CD14-positive monocyte (primary cell): ENCODE measurements at regions of chr10 and their contacts with region 1.

Region 1: GRCh38 chr10:79068562-79069324 is at the start of gene ZMIZ1:
- DNase-seq: peak; percentile 85 to 91 (median 88)
- H3K4me3 ChIP-seq: peak within 1 kb of the TSS; percentile 87 to 99 (median 99)
- H3K4me3 Mint-ChIP-seq: peak within 1 kb of the TSS; percentile 98
- H3K27ac ChIP-seq: peak within 1 kb of the TSS; percentile 94 to 96
- H3K27ac Mint-ChIP-seq: peak within 1 kb of the TSS; percentile 94 to 99 (median 97)
- H3K4me1 ChIP-seq: peaks cover 44 to 60% of the 10 kb centered on the region in 2 donors
- H3K4me1 Mint-ChIP-seq: peaks cover 54% of the 10 kb centered on the region
- H3K27me3 ChIP-seq: no peaks in the 10 kb centered on the region
- H3K27me3 Mint-ChIP-seq: peaks cover 1 to 7% (median 1%) of the 10 kb centered on the region in 3 donors
- CTCF ChIP-seq: peak; percentile 9
- polyA plus RNA-seq, gene ZMIZ1: 3.3 to 64.6 (median 8.9) TPM

Region 2: DNA sequence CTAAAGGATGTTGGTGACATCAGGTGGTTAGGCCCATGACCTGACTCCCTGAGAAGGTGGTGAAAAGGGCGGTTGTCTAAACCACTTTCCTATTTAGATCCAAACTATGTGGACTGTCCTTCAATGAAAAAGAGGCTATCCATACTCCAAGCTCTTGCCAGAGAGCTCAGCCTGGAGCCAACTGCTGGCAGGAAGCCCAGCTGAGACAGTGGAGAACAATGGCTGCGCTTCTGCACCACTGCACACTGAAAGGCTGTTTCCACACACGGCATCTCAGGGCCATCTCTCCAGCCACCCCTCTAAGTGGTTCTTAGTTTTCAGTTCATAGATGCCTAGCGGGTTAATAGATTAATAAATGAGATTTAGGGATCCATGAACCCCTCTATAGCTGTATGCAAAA is 488.7 kb before region 1 on chr10:
- intact Hi-C with region 1: loop called in 1 of 2 experiments (anchors 5 kb)
- DNase-seq: no peak
- H3K4me3 ChIP-seq: no peak overlapping the region
- H3K4me3 Mint-ChIP-seq: no peak overlapping the region
- H3K27ac ChIP-seq: no peak overlapping the region
- H3K27ac Mint-ChIP-seq: peak overlapping the region in 2 of 7 donors; percentile 85 to 97
- H3K4me1 ChIP-seq: peaks cover 22 to 26% of the 10 kb centered on the region in 2 donors
- H3K4me1 Mint-ChIP-seq: peaks cover 40% of the 10 kb centered on the region
- H3K27me3 ChIP-seq: no peaks in the 10 kb centered on the region
- H3K27me3 Mint-ChIP-seq: peaks cover 4 to 7% (median 7%) of the 10 kb centered on the region in 3 donors
- CTCF ChIP-seq: no peak

Region 3: GRCh38 chr10:78763651-78764311 is 305.0 kb before region 1 on chr10:
- intact Hi-C with region 1: loop called in 1 of 2 experiments (anchors 10 kb)
- DNase-seq: no peak
- H3K4me3 ChIP-seq: no peak overlapping the region
- H3K4me3 Mint-ChIP-seq: no peak overlapping the region
- H3K27ac ChIP-seq: no peak overlapping the region
- H3K27ac Mint-ChIP-seq: no peak overlapping the region
- H3K4me1 ChIP-seq: peaks cover 27 to 34% of the 10 kb centered on the region in 2 donors
- H3K4me1 Mint-ChIP-seq: peaks cover 38% of the 10 kb centered on the region
- H3K27me3 ChIP-seq: no peaks in the 10 kb centered on the region
- H3K27me3 Mint-ChIP-seq: peaks cover 2 to 4% (median 2%) of the 10 kb centered on the region in 3 donors
- CTCF ChIP-seq: no peak

Region 4: DNA sequence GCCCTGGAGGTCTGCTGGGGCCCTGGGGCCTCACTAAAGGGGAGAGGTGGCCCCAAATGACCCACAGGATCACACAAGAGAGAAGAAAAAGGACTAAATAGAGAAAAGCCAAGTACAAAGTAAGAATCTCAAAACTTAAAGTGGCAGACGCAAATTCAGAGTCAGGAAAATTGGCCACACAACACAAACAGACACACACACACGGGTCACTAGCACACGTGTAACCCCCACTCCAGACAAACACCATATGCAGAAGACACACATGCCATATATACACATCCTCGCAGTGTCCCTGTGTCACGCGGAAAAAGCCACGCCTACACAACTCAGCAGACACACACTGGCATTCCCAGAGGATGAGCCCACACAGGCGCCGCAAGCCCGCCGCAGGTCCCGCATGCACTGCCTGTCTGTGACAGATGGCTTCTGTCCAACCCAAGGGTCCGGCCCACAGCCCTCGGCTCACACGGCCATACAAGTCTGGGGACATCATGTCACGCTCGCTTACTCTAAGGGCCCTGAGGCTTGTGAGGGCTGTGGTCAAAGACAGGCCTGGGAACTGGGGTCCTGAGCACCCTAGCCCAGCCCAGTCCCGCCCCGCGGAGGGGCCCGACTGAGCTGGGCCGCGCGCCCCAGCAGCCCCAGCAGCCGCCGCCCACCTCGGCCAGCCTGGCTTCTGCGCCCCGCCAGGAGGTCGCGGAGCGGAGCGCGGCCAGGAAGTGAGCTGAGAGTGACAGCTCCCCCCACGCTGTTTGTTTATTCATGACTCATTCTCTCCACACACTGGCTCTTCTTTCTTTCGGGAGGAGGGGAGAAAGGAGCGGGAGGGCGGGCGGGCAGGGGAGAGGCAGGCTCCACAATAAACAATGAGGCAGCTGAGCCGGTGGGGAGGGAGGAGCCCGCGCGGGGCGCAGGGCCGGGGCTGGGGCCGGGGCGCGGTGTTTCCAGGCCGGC is 95.5 kb before region 1 on chr10:
- intact Hi-C with region 1: loop called in 1 of 2 experiments (anchors 5 kb)
- DNase-seq: peak; percentile 87 to 90 (median 89)
- H3K4me3 ChIP-seq: peak overlapping the region; percentile 32 to 73 (median 42)
- H3K4me3 Mint-ChIP-seq: peak overlapping the region; percentile 67 to 70
- H3K27ac ChIP-seq: peak overlapping the region; percentile 27 to 92
- H3K27ac Mint-ChIP-seq: peak overlapping the region in 6 of 7 donors; percentile 61 to 99 (median 82)
- H3K4me1 ChIP-seq: peaks cover 27 to 33% of the 10 kb centered on the region in 2 donors
- H3K4me1 Mint-ChIP-seq: peaks cover 42% of the 10 kb centered on the region
- H3K27me3 ChIP-seq: no peaks in the 10 kb centered on the region
- H3K27me3 Mint-ChIP-seq: peaks cover 5 to 21% (median 6%) of the 10 kb centered on the region in 3 donors
- CTCF ChIP-seq: no peak

Region 5: GRCh38 chr10:79084012-79084971 is 15.5 kb after region 1 on chr10:
- intact Hi-C with region 1: loop called in 1 of 2 experiments (anchors 2 kb)
- DNase-seq: peak; percentile 98 to 99 (median 98)
- H3K4me3 ChIP-seq: peak overlapping the region; percentile 17 to 60 (median 28)
- H3K4me3 Mint-ChIP-seq: peak overlapping the region; percentile 84 to 98
- H3K27ac ChIP-seq: peak overlapping the region; percentile 88 to 96
- H3K27ac Mint-ChIP-seq: peak overlapping the region; percentile 97 to 100 (median 100)
- H3K4me1 ChIP-seq: peaks cover 85 to 91% of the 10 kb centered on the region in 2 donors
- H3K4me1 Mint-ChIP-seq: peaks cover 93% of the 10 kb centered on the region
- H3K27me3 ChIP-seq: no peaks in the 10 kb centered on the region
- H3K27me3 Mint-ChIP-seq: peaks cover 0 to 8% (median 2%) of the 10 kb centered on the region in 3 donors
- CTCF ChIP-seq: no peak

Region 6: DNA sequence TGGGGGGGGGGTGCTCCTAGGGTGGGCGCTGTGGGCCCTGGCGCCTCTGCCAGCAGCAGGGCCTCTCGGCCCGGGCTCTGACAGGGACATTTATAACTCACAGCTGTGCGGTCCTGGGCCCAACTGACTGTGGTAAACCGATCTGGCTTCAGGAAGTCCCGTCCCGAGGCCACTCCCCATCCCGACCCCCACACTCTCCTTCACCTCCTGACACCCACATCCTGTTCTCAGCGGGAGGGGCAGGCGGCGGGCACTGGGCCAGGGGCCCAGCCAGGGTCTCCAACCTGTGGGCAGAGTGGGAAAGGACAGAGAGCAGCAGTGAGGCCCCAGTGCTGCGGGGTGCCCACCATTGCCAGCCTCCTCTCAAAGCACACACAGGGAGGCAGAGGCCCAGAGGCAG is 69.1 kb after region 1 on chr10:
- intact Hi-C with region 1: loop called (anchors 5 kb)
- DNase-seq: no peak
- H3K4me3 ChIP-seq: peak overlapping the region in 1 of 3 experiments; percentile 18
- H3K4me3 Mint-ChIP-seq: no peak overlapping the region
- H3K27ac ChIP-seq: peak overlapping the region in 1 of 2 donors; percentile 17
- H3K27ac Mint-ChIP-seq: peak overlapping the region in 4 of 7 donors; percentile 15 to 40 (median 28)
- H3K4me1 ChIP-seq: peaks cover 54 to 58% of the 10 kb centered on the region in 2 donors
- H3K4me1 Mint-ChIP-seq: peaks cover 73% of the 10 kb centered on the region
- H3K27me3 ChIP-seq: no peaks in the 10 kb centered on the region
- H3K27me3 Mint-ChIP-seq: peaks cover 0 to 1% (median 0%) of the 10 kb centered on the region in 3 donors
- CTCF ChIP-seq: no peak

Region 7: GRCh38 chr10:79195091-79195923 is 126.6 kb after region 1 on chr10:
- intact Hi-C with region 1: loop called in 1 of 2 experiments (anchors 5 kb)
- DNase-seq: peak; percentile 75 to 80 (median 79)
- H3K4me3 ChIP-seq: no peak overlapping the region
- H3K4me3 Mint-ChIP-seq: no peak overlapping the region
- H3K27ac ChIP-seq: no peak overlapping the region
- H3K27ac Mint-ChIP-seq: peak overlapping the region in 2 of 7 donors; percentile 17 to 56
- H3K4me1 ChIP-seq: peaks cover 4 to 5% of the 10 kb centered on the region in 2 donors
- H3K4me1 Mint-ChIP-seq: peaks cover 16% of the 10 kb centered on the region
- H3K27me3 ChIP-seq: no peaks in the 10 kb centered on the region
- H3K27me3 Mint-ChIP-seq: peaks cover 0 to 3% (median 2%) of the 10 kb centered on the region in 3 donors
- CTCF ChIP-seq: peak; percentile 97